Caco-2 (cell line): ENCODE measurements at regions of chr14 and their contacts with region 1.

Region 1: DNA sequence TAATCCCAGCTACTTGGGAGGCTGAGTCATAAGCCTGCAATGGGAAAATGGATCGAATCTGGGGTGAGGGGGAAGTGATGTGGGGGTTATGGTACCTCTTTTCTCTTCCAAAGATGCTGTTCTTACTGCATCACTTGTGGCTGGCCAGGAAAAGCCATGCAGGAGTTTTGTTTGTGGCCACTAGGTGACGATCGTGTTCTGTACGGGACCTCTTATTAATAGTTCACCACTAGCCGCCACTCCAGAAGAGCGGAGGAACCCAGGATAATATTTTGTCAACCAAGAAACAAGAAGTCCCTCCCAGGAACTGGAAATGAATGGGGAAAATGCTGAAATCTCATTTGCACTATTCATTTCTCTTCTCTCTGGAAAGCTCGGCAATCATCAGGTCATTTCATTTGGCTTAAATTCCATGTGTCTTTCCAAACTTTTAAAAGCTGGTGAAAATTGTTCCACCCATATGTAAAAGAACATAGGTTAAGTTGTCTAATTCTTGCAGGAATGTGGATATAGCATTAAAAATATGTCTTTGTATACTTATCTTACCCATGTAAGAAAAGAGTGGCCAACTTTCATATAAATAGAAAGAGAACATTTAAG is 8.9 kb downstream of the GPR65 start:
- DNase-seq: peak; percentile 74 to 76
- H3K4me3 ChIP-seq: no peak overlapping the region
- H3K4me3 Mint-ChIP-seq: no peak overlapping the region
- H3K27ac Mint-ChIP-seq: no peak overlapping the region
- H3K4me1 ChIP-seq: no peaks in the 10 kb centered on the region
- H3K4me1 Mint-ChIP-seq: peaks cover 7% of the 10 kb centered on the region
- H3K27me3 ChIP-seq: no peaks in the 10 kb centered on the region
- H3K27me3 Mint-ChIP-seq: peaks cover 3% of the 10 kb centered on the region
- CTCF ChIP-seq: peak; percentile 88 to 95

Region 2: GRCh38 chr14:87944987-87945604 is 68.8 kb before region 1 on chr14:
- CTCF ChIA-PET with region 1: no interaction called
- POLR2A ChIA-PET with region 1: no interaction called
- intact Hi-C with region 1: loop called (anchors 1 kb)
- DNase-seq: peak in 1 of 2 experiments; percentile 15
- H3K4me3 ChIP-seq: no peak overlapping the region
- H3K4me3 Mint-ChIP-seq: no peak overlapping the region
- H3K27ac Mint-ChIP-seq: no peak overlapping the region
- H3K4me1 ChIP-seq: no peaks in the 10 kb centered on the region
- H3K4me1 Mint-ChIP-seq: no peaks in the 10 kb centered on the region
- H3K27me3 ChIP-seq: no peaks in the 10 kb centered on the region
- H3K27me3 Mint-ChIP-seq: no peaks in the 10 kb centered on the region
- CTCF ChIP-seq: peak; percentile 43 to 58

Region 3: DNA sequence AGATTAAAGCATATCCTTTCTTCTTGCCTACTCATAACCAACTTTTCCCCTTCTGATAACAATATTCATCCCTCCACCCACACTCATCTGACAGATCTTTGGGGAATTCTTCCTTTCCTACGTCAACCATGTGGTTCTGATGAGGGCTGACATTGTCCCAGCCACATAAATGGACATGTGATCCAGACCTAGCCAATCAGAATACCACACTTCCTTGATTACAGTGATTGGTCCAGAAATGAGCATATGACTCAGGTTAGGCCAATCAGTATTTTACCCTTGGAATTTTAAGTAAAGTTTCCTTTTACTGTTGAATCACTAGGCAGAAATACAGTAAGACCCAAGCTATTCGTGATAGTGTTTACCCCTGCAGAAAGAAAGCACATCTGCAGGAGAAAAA is 50.0 kb after region 1 on chr14:
- CTCF ChIA-PET with region 1: no interaction called
- POLR2A ChIA-PET with region 1: no interaction called
- intact Hi-C with region 1: no loop called
- DNase-seq: no peak
- H3K4me3 ChIP-seq: no peak overlapping the region
- H3K4me3 Mint-ChIP-seq: no peak overlapping the region
- H3K27ac Mint-ChIP-seq: no peak overlapping the region
- H3K4me1 ChIP-seq: no peaks in the 10 kb centered on the region
- H3K4me1 Mint-ChIP-seq: peaks cover 6% of the 10 kb centered on the region
- H3K27me3 ChIP-seq: no peaks in the 10 kb centered on the region
- H3K27me3 Mint-ChIP-seq: peaks cover 4% of the 10 kb centered on the region
- CTCF ChIP-seq: no peak

Region 4: GRCh38 chr14:88168498-88169165 is 154.8 kb after region 1 on chr14:
- CTCF ChIA-PET with region 1: interaction called, 9 read pairs
- POLR2A ChIA-PET with region 1: no interaction called
- intact Hi-C with region 1: loop called (anchors 1 kb)
- DNase-seq: peak in 1 of 2 experiments; percentile 56
- H3K4me3 ChIP-seq: no peak overlapping the region
- H3K4me3 Mint-ChIP-seq: no peak overlapping the region
- H3K27ac Mint-ChIP-seq: no peak overlapping the region
- H3K4me1 ChIP-seq: no peaks in the 10 kb centered on the region
- H3K4me1 Mint-ChIP-seq: no peaks in the 10 kb centered on the region
- H3K27me3 ChIP-seq: no peaks in the 10 kb centered on the region
- H3K27me3 Mint-ChIP-seq: peaks cover 3% of the 10 kb centered on the region
- CTCF ChIP-seq: peak; percentile 44 to 49

Region 5: DNA sequence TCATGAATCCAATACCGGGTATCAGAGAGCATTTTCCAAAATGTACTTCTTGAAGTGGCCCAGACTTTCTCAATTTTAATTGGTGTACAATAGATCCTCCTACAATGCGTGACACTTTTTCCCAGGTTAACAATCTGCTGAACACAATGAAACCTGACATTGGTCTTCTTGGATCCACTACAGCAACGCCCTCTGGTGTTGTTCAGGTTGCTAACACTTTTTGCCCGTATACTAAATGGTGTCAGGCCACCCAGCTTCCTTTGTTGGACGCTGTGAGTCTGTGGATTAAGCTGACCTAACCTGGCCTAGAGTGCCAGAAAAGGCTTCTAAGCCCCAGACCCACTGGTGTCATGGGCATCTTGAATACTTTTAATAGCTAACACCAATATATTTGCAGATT is 220.1 kb after region 1 on chr14:
- CTCF ChIA-PET with region 1: interaction called, 4 read pairs
- POLR2A ChIA-PET with region 1: no interaction called
- intact Hi-C with region 1: loop called (anchors 1 kb)
- DNase-seq: peak; percentile 36 to 39
- H3K4me3 ChIP-seq: no peak overlapping the region
- H3K4me3 Mint-ChIP-seq: no peak overlapping the region
- H3K27ac Mint-ChIP-seq: no peak overlapping the region
- H3K4me1 ChIP-seq: no peaks in the 10 kb centered on the region
- H3K4me1 Mint-ChIP-seq: no peaks in the 10 kb centered on the region
- H3K27me3 ChIP-seq: no peaks in the 10 kb centered on the region
- H3K27me3 Mint-ChIP-seq: no peaks in the 10 kb centered on the region
- CTCF ChIP-seq: peak; percentile 25 to 33

Region 6: DNA sequence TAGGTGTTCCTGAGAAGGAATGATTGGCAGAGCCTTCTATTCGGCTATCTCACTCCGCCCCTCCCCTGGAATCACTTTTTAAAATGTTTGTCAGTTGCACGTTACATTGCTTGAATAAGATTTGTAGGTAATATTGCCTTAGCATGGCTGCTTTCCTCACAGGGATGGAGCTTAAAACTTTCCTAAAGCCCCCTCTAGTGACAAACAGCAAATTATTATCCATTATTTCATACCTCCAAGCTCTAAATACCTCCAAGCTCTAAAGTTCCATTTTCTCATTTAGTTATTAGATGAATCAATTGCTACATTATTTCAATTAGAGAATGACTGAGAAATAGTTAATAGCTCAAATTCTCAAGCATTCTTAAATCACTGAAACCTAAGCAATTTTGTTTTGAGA is 366.6 kb after region 1 on chr14:
- CTCF ChIA-PET with region 1: interaction called, 5 read pairs
- POLR2A ChIA-PET with region 1: no interaction called
- intact Hi-C with region 1: loop called (anchors 1 kb)
- DNase-seq: peak in 1 of 2 experiments; percentile 29
- H3K4me3 ChIP-seq: no peak overlapping the region
- H3K4me3 Mint-ChIP-seq: no peak overlapping the region
- H3K27ac Mint-ChIP-seq: no peak overlapping the region
- H3K4me1 ChIP-seq: no peaks in the 10 kb centered on the region
- H3K4me1 Mint-ChIP-seq: no peaks in the 10 kb centered on the region
- H3K27me3 ChIP-seq: no peaks in the 10 kb centered on the region
- H3K27me3 Mint-ChIP-seq: peaks cover 3% of the 10 kb centered on the region
- CTCF ChIP-seq: peak; percentile 38 to 47

Region 7: GRCh38 chr14:88437658-88438057 is 423.8 kb after region 1 on chr14:
- CTCF ChIA-PET with region 1: no interaction called
- POLR2A ChIA-PET with region 1: no interaction called
- intact Hi-C with region 1: loop called (anchors 5 kb)
- DNase-seq: no peak
- H3K4me3 ChIP-seq: no peak overlapping the region
- H3K4me3 Mint-ChIP-seq: no peak overlapping the region
- H3K27ac Mint-ChIP-seq: no peak overlapping the region
- H3K4me1 ChIP-seq: no peaks in the 10 kb centered on the region
- H3K4me1 Mint-ChIP-seq: no peaks in the 10 kb centered on the region
- H3K27me3 ChIP-seq: no peaks in the 10 kb centered on the region
- H3K27me3 Mint-ChIP-seq: no peaks in the 10 kb centered on the region
- CTCF ChIP-seq: no peak

Region 8: DNA sequence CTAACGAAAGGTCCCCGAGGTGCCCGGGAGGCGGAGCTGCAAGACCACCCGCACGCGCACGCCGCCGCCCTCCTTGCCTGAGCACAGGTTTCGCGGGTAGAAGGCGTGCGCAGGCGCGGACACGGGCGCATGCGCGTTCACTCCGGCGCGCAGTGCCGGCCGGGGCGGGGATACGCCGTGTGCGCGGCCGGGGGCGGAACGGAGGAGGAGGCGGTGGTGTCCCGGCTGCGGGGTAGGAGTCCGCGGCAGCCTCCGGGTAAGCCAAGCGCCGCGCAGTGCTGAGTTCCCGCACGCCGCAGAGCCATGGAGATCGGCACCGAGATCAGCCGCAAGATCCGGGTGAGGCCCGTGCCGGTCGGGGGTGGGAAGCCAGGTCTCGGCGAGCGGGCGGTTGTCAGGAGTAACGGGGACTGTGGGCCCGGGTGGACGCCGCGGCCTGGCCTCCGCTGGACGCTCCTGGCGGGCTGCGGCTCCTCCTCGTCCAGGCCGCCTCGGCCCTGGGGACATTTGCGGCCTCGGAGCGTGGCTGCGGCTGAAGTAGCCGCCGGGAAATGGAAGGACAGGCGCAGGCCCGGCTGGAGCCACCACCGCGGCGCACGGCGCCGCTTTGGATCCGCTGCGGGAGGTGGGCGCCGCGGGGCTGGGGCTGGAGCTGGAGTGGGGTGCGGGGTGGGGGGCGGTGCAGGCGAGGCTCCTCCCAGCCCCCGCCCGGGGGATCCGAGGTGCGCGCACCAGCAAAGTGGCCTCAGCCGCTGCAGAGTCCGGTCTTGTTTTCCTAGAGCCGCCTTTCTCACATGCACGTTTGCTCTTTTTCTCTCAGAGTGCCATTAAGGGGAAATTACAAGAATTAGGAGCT is 549.2 kb after region 1 on chr14 and contains the start of gene ZC3H14:
- CTCF ChIA-PET with region 1: no interaction called
- POLR2A ChIA-PET with region 1: no interaction called
- intact Hi-C with region 1: loop called (anchors 5 kb)
- DNase-seq: peak; percentile 87 to 93
- H3K4me3 ChIP-seq: peak within 1 kb of the TSS; percentile 99
- H3K4me3 Mint-ChIP-seq: peak within 1 kb of the TSS; percentile 73
- H3K27ac Mint-ChIP-seq: peak within 1 kb of the TSS; percentile 44
- H3K4me1 ChIP-seq: peaks cover 18% of the 10 kb centered on the region; the same call in 1 of the 2 replicates
- H3K4me1 Mint-ChIP-seq: peaks cover 7% of the 10 kb centered on the region
- H3K27me3 ChIP-seq: no peaks in the 10 kb centered on the region
- H3K27me3 Mint-ChIP-seq: no peaks in the 10 kb centered on the region
- CTCF ChIP-seq: no peak
- total RNA-seq, gene ZC3H14: 77.1 and 77.6 TPM in 2 replicates